Activated CD8-positive, alpha-beta memory T cell treated with anti-CD3 and anti-CD28 coated beads, Interleukin-2, amount 10 ng/mL, durations not matched to agents 7 days and 5 days (primary cell): ENCODE measurements at regions of chr12 and their contacts with region 1.

Region 1: GRCh38 chr12:107402041-107403022 is 283.3 kb upstream of the PWP1 start:
- DNase-seq: peak; percentile 78
- ATAC-seq: peak; percentile 78
- H3K4me3 Mint-ChIP-seq: no peak overlapping the region
- H3K27ac Mint-ChIP-seq: no peak overlapping the region
- H3K4me1 Mint-ChIP-seq: peaks cover 8% of the 10 kb centered on the region
- H3K27me3 Mint-ChIP-seq: no peaks in the 10 kb centered on the region

Region 2: GRCh38 chr12:107126796-107127481 is 275.4 kb before region 1 on chr12:
- CTCF ChIA-PET with region 1: interaction called, 50 read pairs
- DNase-seq: no peak
- ATAC-seq: no peak
- H3K4me3 Mint-ChIP-seq: no peak overlapping the region
- H3K27ac Mint-ChIP-seq: no peak overlapping the region
- H3K4me1 Mint-ChIP-seq: no peaks in the 10 kb centered on the region
- H3K27me3 Mint-ChIP-seq: peaks cover 27% of the 10 kb centered on the region

Region 3: GRCh38 chr12:107317751-107318613 is 84.3 kb before region 1 on chr12:
- CTCF ChIA-PET with region 1: interaction called, 104 read pairs
- DNase-seq: peak; percentile 93
- ATAC-seq: peak; percentile 80
- H3K4me3 Mint-ChIP-seq: peak overlapping the region; percentile 79
- H3K27ac Mint-ChIP-seq: no peak overlapping the region
- H3K4me1 Mint-ChIP-seq: peaks cover 33% of the 10 kb centered on the region
- H3K27me3 Mint-ChIP-seq: peaks cover 54% of the 10 kb centered on the region

Region 4: DNA sequence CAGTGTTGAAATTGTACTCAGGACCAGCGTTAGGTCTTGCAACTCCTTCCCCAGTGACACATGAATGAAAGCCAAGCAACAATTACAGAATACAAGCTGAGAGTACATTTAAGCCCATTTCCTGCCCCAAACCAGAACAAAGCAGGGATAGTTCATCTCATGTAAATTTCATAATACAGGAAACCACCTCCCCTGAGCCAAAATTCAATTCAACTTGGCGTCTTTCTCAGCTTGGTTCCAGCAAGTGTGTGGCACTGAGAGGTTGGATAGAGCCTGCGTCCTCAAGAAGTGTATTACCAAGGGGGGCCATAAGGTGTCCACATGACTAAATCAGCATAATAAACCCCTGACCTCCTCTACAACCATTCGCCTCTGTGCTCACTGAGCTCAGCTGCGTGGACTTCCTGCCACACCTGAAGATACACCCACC is 30.1 kb before region 1 on chr12:
- CTCF ChIA-PET with region 1: interaction called, 24 read pairs
- DNase-seq: peak; percentile 63
- ATAC-seq: peak; percentile 40
- H3K4me3 Mint-ChIP-seq: peak overlapping the region; percentile 9
- H3K27ac Mint-ChIP-seq: peak overlapping the region; percentile 69
- H3K4me1 Mint-ChIP-seq: peaks cover 67% of the 10 kb centered on the region
- H3K27me3 Mint-ChIP-seq: no peaks in the 10 kb centered on the region

Region 5: GRCh38 chr12:107607464-107608392 is 205.4 kb after region 1 on chr12:
- CTCF ChIA-PET with region 1: interaction called, 31 read pairs
- DNase-seq: peak; percentile 84
- ATAC-seq: peak; percentile 73
- H3K4me3 Mint-ChIP-seq: no peak overlapping the region
- H3K27ac Mint-ChIP-seq: no peak overlapping the region
- H3K4me1 Mint-ChIP-seq: no peaks in the 10 kb centered on the region
- H3K27me3 Mint-ChIP-seq: no peaks in the 10 kb centered on the region